ENCODE measurements at regions of chr4 and their contacts with region 1.

Region 1: DNA sequence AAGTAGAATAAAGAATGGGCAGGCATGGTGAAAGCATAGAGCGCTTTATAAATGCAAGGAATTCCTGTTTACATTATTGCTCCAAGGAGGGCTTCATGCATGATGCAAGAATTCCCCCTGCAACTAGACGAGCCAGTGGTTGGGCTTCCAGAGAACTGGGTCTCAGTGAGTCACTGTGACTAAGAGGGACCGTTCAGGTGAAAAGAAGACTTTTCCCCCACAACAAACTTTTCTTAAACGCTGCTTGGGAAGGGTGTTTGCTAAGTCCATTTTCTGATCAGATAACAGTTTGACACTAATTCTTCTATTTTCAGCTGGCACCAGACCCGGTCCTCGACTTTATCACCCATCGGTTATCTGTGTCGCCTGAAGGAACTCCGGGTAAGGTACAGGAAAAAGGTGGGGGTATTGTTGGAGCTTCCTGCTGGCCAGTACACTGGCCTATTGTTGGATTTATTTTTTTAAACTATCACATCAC is 40.1 kb downstream of the LDB2 start:
- DNase-seq: peak; percentile 98
- H3K4me3 ChIP-seq: peak overlapping the region in 1 of 3 experiments; percentile 18
- H3K27ac ChIP-seq: peak overlapping the region; percentile 79
- H3K4me1 ChIP-seq: peaks cover 64% of the 10 kb centered on the region
- H3K27me3 ChIP-seq: no peaks in the 10 kb centered on the region
- CTCF ChIP-seq: no peak
- POLR2A ChIP-seq: peak; percentile 65

Region 2: DNA sequence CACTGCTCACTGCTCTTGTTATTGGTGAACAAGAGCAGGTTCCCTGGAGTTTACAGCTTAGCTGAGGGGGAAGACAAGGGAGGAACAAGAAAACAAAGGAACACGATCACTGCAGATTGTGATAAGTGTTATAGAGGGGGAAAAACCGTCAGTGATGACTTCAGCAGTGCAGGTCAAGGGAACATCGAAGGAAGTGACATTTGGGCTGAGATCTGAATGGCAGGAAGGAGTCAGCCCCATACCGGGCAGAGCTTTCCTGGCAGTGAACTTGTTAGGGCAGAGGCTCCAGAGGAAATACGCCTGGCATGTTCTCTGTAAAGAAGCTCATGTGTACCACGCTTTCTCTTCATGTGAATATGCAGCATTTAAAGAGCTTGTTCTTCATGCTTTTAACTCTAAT is 38.0 kb before region 1 on chr4:
- CTCF ChIA-PET with region 1: interaction called, 6 read pairs
- POLR2A ChIA-PET with region 1: no interaction called
- dilution Hi-C with region 1: no loop called
- intact Hi-C with region 1: loop called (anchors 1 kb)
- DNase-seq: peak; percentile 94
- H3K4me3 ChIP-seq: peak overlapping the region in 1 of 3 experiments; percentile 57
- H3K27ac ChIP-seq: peak overlapping the region; percentile 85
- H3K4me1 ChIP-seq: peaks cover 25% of the 10 kb centered on the region
- H3K27me3 ChIP-seq: no peaks in the 10 kb centered on the region
- CTCF ChIP-seq: no peak
- POLR2A ChIP-seq: peak; percentile 50

Region 3: DNA sequence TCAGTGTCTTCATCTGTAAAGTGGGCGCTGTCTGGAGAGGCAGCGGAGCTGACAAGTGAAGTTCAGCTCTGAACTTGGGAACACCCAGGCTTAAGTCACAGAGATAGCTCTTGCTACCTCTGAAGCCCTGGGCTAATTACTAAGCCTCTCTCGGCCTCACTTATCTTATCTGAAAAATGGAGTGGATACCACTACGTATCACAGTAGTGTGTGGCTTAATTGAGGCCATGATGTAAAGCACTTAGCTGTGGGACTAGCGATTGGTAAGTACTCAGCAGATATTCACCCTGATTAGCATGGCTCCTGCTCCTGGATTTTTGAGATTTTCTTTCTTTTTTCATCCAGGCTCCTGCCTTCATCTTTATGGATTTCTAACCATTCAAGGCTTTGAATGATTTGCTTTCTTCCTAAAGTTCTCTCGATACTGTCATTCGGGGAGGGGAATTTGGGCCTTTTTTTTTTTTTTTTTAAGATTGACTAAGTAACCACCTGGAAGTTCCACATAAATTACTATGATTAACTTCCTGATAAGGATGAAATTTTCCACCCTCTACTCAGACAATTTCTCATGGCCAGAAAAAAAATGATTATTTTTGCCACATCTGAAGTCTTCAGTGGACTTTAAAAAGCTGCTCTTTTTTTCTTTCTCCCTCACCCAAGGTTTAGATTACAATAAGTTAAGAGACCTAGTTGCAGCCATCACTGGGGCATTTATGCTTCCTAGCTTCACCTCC is 23.0 kb after region 1 on chr4:
- CTCF ChIA-PET with region 1: no interaction called
- POLR2A ChIA-PET with region 1: interaction called, 10 read pairs
- dilution Hi-C with region 1: no loop called
- intact Hi-C with region 1: no loop called
- DNase-seq: no peak
- H3K4me3 ChIP-seq: no peak overlapping the region
- H3K27ac ChIP-seq: no peak overlapping the region
- H3K4me1 ChIP-seq: no peaks in the 10 kb centered on the region
- H3K27me3 ChIP-seq: no peaks in the 10 kb centered on the region
- CTCF ChIP-seq: no peak
- POLR2A ChIP-seq: no peak

Region 4: GRCh38 chr4:16897991-16898827 is 39.9 kb after region 1 on chr4 and contains the start of gene LDB2:
- CTCF ChIA-PET with region 1: interaction called, 9 read pairs
- POLR2A ChIA-PET with region 1: interaction called, 4 read pairs
- dilution Hi-C with region 1: no loop called
- intact Hi-C with region 1: loop called (anchors 1 kb)
- DNase-seq: peak; percentile 88
- H3K4me3 ChIP-seq: peak within 1 kb of the TSS; percentile 66 to 97 (median 86)
- H3K27ac ChIP-seq: peak within 1 kb of the TSS; percentile 59
- H3K4me1 ChIP-seq: peaks cover 38% of the 10 kb centered on the region
- H3K27me3 ChIP-seq: no peaks in the 10 kb centered on the region
- CTCF ChIP-seq: no peak
- POLR2A ChIP-seq: no peak
- total RNA-seq, gene LDB2: 80.9 and 127 TPM in 2 replicates

Measured in endothelial cell of umbilical vein (primary cell).